ENCODE measurements at regions of chr15 and their contacts with region 1.

Region 1: DNA sequence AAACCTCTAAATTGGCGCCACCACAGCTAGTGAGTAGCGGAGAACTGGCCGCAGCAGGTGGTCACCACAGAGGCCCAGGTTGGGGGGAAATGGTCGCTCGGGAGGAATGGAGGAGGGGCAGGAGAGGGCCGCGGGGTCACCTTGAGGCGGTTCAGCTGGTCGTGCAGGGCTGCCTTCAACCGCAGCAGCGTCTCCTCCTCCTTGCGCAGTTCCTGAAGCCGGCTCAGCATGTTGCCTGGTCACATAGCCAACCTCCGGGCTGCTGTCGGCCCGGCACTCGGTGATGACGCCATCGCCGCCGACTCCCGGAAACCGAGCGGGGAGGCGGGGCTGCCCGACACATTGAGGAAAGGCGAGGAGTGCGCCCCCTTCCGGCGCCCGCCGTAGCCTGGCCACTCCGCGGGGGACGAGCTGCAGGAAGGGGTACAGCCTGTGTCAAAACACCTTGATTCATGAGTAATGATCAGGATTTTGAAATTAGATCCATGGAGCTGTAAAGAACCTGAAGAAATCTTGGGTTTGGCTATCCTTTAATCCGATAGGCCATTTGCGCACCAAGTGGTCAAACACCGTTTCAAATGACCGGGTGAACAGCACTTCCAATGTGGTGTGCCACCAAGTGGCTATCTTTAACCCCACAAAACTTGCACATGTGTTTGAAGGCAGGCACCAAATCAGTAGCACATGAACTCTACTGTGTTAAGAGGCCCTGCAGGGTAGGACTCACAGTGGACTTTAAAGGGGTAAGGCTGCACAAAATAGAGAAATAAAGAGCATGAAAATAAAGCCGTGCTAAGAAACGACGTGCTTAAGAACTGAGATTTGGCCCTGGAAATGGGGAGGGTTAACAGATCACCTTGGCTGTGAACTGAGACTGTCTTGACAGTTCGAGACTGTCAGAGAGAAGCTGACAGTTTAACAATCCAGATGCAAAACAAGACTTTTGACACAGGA is at the start of gene SNAPC5:
- DNase-seq: peak; percentile 97 to 98
- ATAC-seq: peak; percentile 94 to 96 (median 94)
- H3K4me3 ChIP-seq: peak within 1 kb of the TSS; percentile 91
- H3K27ac ChIP-seq: peak within 1 kb of the TSS; percentile 88
- H3K4me1 ChIP-seq: peaks cover 35% of the 10 kb centered on the region
- H3K27me3 ChIP-seq: no peaks in the 10 kb centered on the region
- CTCF ChIP-seq: peak; percentile 96
- total RNA-seq, gene SNAPC5: 32.7 to 50.3 (median 33.4) TPM

Region 2: DNA sequence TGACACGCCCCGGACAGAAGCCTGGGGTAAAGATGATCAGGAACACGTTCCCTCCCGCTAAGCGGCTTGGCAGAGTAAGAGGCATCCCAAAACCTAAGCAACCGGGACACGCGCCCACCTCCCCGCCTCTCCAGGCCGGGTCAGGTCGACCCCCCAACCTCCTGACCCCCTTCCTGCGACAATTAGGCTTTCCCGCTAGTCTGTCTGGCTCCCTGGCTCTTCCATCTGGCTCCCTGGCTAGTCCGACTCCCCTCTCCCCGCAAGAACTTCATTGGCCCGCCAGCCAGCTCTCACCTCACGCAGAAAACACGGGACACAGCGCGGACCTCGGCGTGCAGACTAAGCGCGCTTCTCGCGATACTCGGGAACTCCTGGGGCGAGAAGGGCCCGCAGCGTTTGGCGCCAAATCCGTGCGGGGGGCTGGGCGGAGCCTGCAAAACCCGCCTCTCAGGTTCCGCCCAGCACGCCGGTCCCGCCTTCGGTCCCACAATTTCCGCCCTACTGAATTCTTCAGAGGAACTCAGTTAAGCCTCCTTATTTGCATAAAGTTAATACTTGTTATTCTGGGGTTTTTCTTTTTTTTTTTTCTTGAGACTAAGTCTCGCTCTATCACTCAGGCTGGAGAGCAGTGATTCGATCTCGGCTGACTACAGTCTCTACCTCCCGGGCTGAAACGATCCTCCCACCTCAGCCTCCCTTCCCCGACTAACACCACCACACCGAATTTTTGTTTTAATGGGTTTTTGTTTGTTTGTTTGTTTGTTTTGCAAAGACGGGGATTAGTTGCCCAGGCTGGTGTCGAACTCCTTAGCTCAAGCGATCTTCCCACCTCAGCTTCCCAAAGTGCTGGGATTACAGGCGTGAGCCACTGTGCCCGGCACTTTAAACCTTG is 141.2 kb before region 1 on chr15 and contains the start of gene TIPIN:
- intact Hi-C with region 1: loop called in 1 of 2 experiments (anchors 10 kb)
- DNase-seq: peak; percentile 95 to 97
- ATAC-seq: peak; percentile 96 to 100 (median 99)
- H3K4me3 ChIP-seq: peak within 1 kb of the TSS; percentile 76
- H3K27ac ChIP-seq: peak within 1 kb of the TSS; percentile 64
- H3K4me1 ChIP-seq: peaks cover 3% of the 10 kb centered on the region
- H3K27me3 ChIP-seq: no peaks in the 10 kb centered on the region
- CTCF ChIP-seq: no peak
- total RNA-seq, gene TIPIN: 3.1 to 4.9 (median 3.5) TPM

Region 3: DNA sequence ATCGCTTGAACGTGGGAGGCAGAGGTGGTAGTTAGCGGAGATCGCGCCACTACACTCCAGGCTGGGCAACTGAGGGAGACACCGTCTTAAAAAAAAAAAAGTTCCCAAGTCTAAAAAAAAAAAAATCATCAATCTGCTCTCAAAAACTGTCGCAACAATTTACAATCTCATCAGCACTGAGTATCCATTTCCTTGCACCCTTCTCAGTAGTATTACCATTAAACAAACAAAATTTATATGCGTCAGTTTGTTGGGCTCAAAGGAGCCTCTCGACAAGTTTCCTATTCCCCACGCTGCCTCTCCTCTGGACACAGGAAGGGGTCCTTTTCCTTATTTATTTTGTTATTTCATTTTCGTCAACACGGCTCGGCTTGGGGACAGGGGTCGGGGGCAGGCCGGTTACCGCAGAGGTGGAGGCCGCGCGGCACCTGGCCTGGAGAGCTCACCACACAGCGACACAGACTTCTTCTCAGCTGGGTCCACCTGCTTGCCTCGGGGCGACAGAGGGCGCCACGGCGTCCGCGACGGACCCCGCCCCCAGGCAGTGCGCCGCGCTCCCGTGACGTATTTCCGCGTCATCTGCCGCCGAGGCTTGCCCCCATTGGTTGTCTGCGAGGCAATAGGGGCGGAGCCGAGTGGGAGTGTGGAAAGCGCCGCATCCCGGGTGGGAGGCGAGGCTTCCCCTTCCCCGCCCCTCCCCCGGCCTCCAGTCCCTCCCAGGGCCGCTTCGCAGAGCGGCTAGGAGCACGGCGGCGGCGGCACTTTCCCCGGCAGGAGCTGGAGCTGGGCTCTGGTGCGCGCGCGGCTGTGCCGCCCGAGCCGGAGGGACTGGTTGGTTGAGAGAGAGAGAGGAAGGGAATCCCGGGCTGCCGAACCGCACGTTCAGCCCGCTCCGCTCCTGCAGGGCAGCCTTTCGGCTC is 111.3 kb before region 1 on chr15 and contains the start of gene MAP2K1:
- intact Hi-C with region 1: loop called (anchors 2 kb)
- DNase-seq: peak; percentile 99
- ATAC-seq: peak; percentile 96 to 97 (median 96)
- H3K4me3 ChIP-seq: peak within 1 kb of the TSS; percentile 94
- H3K27ac ChIP-seq: peak within 1 kb of the TSS; percentile 95
- H3K4me1 ChIP-seq: peaks cover 43% of the 10 kb centered on the region
- H3K27me3 ChIP-seq: no peaks in the 10 kb centered on the region
- CTCF ChIP-seq: peak; percentile 68
- total RNA-seq, gene MAP2K1: 56.3 to 90.0 (median 64.8) TPM

Region 4: GRCh38 chr15:66588537-66588936 is 90.8 kb after region 1 on chr15:
- intact Hi-C with region 1: no loop called
- DNase-seq: no peak
- ATAC-seq: no peak
- H3K4me3 ChIP-seq: no peak overlapping the region
- H3K27ac ChIP-seq: no peak overlapping the region
- H3K4me1 ChIP-seq: no peaks in the 10 kb centered on the region
- H3K27me3 ChIP-seq: peaks cover 0 to 20% (median 0%) of the 10 kb centered on the region in 3 donors
- CTCF ChIP-seq: no peak

Measured in psoas muscle (tissue), 8 donors.